ENCODE measurements at regions of chr15 and their contacts with region 1.

Region 1: DNA sequence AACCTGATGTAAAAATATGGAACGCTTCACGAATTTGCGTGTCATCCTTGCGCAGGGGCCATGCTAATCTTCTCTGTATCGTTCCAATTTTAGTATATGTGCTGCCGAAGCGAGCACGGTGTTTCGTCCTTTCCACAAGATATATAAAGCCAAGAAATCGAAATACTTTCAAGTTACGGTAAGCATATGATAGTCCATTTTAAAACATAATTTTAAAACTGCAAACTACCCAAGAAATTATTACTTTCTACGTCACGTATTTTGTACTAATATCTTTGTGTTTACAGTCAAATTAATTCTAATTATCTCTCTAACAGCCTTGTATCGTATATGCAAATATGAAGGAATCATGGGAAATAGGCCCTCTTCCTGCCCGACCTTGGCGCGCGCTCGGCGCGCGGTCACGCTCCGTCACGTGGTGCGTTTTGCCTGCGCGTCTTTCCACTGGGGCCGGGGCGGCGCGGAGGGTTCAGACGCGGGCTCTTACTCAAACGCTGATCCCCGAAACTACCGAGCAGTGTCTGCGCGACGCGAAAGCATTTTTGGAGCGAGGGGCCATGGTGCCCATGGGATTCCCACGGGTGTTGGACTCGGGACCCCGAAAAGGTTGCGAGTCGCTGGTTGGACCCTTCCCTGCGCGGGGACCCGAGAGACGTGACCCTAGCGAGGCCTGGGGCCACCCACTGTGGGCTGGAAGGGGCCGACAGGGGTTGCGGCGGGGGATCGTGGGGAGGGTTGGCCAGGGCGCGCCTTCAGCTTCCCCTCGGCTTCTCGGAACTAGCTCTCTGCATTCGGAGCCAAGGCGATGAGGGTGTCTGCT is at the start of gene RNU6-1:
- DNase-seq: peak; percentile 71 to 88
- H3K4me3 ChIP-seq: peak within 1 kb of the TSS; percentile 69
- H3K27ac ChIP-seq: peak within 1 kb of the TSS; percentile 73
- H3K4me1 ChIP-seq: peaks cover 10% of the 10 kb centered on the region
- H3K27me3 ChIP-seq: no peaks in the 10 kb centered on the region
- CTCF ChIP-seq: no peak
- total RNA-seq, gene RNU6-1: not detected in 2 replicates

Region 2: DNA sequence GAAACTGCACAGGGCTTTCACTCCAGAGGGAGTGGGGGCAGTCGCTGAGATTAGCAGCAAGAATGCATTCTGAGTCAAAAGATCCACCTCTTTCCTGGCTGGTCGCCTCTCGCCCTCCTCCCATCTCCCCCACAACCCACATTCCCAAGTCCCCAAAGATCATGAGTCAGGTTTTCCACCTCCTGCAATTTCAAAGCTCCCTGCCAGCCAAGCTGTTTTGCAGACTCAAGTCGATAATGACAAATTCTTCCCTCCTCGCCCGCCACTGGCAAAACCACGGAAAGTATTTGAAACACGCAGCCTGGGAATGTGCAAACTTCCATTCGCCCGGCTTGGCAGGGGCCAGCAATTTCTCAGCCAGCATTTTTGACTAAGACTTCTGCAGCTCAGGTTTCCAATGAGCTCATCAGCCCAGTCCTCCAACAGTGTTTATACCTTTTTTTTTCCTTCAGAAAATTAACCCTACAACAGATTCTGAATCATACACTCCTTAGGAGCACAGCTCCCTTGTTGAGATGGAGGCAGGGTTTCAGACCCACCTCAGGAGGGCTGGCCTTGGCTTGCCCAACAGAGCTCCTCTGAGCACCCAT is 956.7 kb before region 1 on chr15:
- CTCF ChIA-PET with region 1: no interaction called
- POLR2A ChIA-PET with region 1: no interaction called
- intact Hi-C with region 1: loop called (anchors 10 kb)
- DNase-seq: peak; percentile 96 to 97
- H3K4me3 ChIP-seq: no peak overlapping the region
- H3K27ac ChIP-seq: peak overlapping the region; percentile 74
- H3K4me1 ChIP-seq: peaks cover 35% of the 10 kb centered on the region
- H3K27me3 ChIP-seq: no peaks in the 10 kb centered on the region
- CTCF ChIP-seq: no peak

Region 3: GRCh38 chr15:67120839-67121643 is 719.1 kb before region 1 on chr15:
- CTCF ChIA-PET with region 1: no interaction called
- POLR2A ChIA-PET with region 1: no interaction called
- intact Hi-C with region 1: loop called (anchors 10 kb)
- DNase-seq: peak in 1 of 2 experiments; percentile 56
- H3K4me3 ChIP-seq: no peak overlapping the region
- H3K27ac ChIP-seq: peak overlapping the region; percentile 98; the same call in 1 of the 2 replicates
- H3K4me1 ChIP-seq: peaks cover 76% of the 10 kb centered on the region
- H3K27me3 ChIP-seq: no peaks in the 10 kb centered on the region
- CTCF ChIP-seq: no peak

Region 4: GRCh38 chr15:67303490-67304363 is 536.4 kb before region 1 on chr15:
- CTCF ChIA-PET with region 1: no interaction called
- POLR2A ChIA-PET with region 1: no interaction called
- intact Hi-C with region 1: loop called (anchors 5 kb)
- DNase-seq: no peak
- H3K4me3 ChIP-seq: no peak overlapping the region
- H3K27ac ChIP-seq: no peak overlapping the region
- H3K4me1 ChIP-seq: no peaks in the 10 kb centered on the region
- H3K27me3 ChIP-seq: no peaks in the 10 kb centered on the region
- CTCF ChIP-seq: peak; percentile 66

Region 5: GRCh38 chr15:67456677-67457529 is 383.2 kb before region 1 on chr15:
- CTCF ChIA-PET with region 1: no interaction called
- POLR2A ChIA-PET with region 1: no interaction called
- intact Hi-C with region 1: loop called (anchors 1 kb)
- DNase-seq: peak in 1 of 2 experiments; percentile 58
- H3K4me3 ChIP-seq: no peak overlapping the region
- H3K27ac ChIP-seq: no peak overlapping the region
- H3K4me1 ChIP-seq: no peaks in the 10 kb centered on the region
- H3K27me3 ChIP-seq: no peaks in the 10 kb centered on the region
- CTCF ChIP-seq: peak; percentile 81

Region 6: GRCh38 chr15:67542420-67543347 is 297.5 kb before region 1 on chr15 and contains the start of gene MAP2K5:
- CTCF ChIA-PET with region 1: no interaction called
- POLR2A ChIA-PET with region 1: no interaction called
- intact Hi-C with region 1: loop called (anchors 5 kb)
- DNase-seq: peak; percentile 48 to 80
- H3K4me3 ChIP-seq: peak within 1 kb of the TSS; percentile 82
- H3K27ac ChIP-seq: peak within 1 kb of the TSS; percentile 54
- H3K4me1 ChIP-seq: peaks cover 7% of the 10 kb centered on the region
- H3K27me3 ChIP-seq: no peaks in the 10 kb centered on the region
- CTCF ChIP-seq: no peak
- total RNA-seq, gene MAP2K5: 25.6 and 26.9 TPM in 2 replicates

Region 7: GRCh38 chr15:67758619-67759300 is 81.4 kb before region 1 on chr15:
- CTCF ChIA-PET with region 1: no interaction called
- POLR2A ChIA-PET with region 1: no interaction called
- intact Hi-C with region 1: no loop called
- DNase-seq: no peak
- H3K4me3 ChIP-seq: no peak overlapping the region
- H3K27ac ChIP-seq: no peak overlapping the region
- H3K4me1 ChIP-seq: no peaks in the 10 kb centered on the region
- H3K27me3 ChIP-seq: no peaks in the 10 kb centered on the region
- CTCF ChIP-seq: no peak